Caco-2 (cell line): ENCODE measurements at regions of chr16 and their contacts with region 1.

Region 1: GRCh38 chr16:85330694-85331188 is 218.5 kb upstream of the CIBAR2 start:
- DNase-seq: peak; percentile 72 to 81
- H3K4me3 ChIP-seq: no peak overlapping the region
- H3K4me3 Mint-ChIP-seq: no peak overlapping the region
- H3K27ac Mint-ChIP-seq: peak overlapping the region; percentile 8
- H3K4me1 ChIP-seq: peaks cover 44% of the 10 kb centered on the region
- H3K4me1 Mint-ChIP-seq: peaks cover 39% of the 10 kb centered on the region
- H3K27me3 ChIP-seq: no peaks in the 10 kb centered on the region
- H3K27me3 Mint-ChIP-seq: no peaks in the 10 kb centered on the region
- CTCF ChIP-seq: peak; percentile 74 to 81

Region 2: GRCh38 chr16:85275533-85276249 is 55.0 kb before region 1 on chr16:
- CTCF ChIA-PET with region 1: interaction called, 4 read pairs
- POLR2A ChIA-PET with region 1: no interaction called
- intact Hi-C with region 1: loop called (anchors 2 kb)
- DNase-seq: peak; percentile 69 to 88
- H3K4me3 ChIP-seq: no peak overlapping the region
- H3K4me3 Mint-ChIP-seq: no peak overlapping the region
- H3K27ac Mint-ChIP-seq: no peak overlapping the region
- H3K4me1 ChIP-seq: no peaks in the 10 kb centered on the region
- H3K4me1 Mint-ChIP-seq: no peaks in the 10 kb centered on the region
- H3K27me3 ChIP-seq: no peaks in the 10 kb centered on the region
- H3K27me3 Mint-ChIP-seq: no peaks in the 10 kb centered on the region
- CTCF ChIP-seq: peak; percentile 97 to 98

Region 3: DNA sequence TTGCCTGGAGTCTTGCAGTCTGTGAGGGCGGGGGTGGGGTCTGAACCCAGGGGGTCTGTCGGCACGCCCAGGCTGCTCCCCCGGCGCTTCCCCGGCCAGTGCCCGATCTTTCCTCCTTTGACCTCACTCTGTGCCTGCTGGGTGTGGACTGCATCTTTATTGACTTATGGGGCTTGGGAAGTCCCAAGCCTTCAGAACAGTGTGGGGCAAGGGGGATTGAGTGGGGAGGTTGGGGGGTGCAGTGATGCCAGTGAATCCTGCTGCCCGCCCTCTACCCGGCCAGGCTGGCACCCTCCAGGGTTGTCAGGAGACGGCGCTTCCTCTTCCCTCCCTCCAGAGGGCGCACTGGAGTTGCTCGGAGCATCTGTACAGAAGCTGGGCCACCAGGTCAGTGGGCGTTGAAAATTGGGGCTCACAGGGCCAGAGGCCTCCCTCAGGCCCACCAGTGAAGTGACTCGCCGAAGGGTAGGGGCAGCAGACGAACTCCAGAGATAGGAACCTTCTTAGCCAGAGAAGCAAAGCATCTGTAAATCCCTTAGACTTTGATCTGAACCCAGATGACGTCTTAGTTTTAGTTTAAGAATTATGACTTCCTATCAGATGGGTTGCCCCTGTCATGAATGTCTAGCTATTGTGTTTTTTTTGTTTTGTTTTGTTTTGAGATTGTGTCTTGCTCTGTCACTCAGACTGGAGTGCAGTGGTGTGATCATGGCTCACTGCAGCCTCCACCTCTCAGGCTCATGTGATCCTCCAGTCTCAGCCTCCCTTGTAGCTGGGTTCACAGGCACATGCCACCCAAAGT is 33.7 kb before region 1 on chr16:
- CTCF ChIA-PET with region 1: interaction called, 8 read pairs
- POLR2A ChIA-PET with region 1: no interaction called
- intact Hi-C with region 1: loop called (anchors 5 kb)
- DNase-seq: peak; percentile 66 to 76
- H3K4me3 ChIP-seq: no peak overlapping the region
- H3K4me3 Mint-ChIP-seq: no peak overlapping the region
- H3K27ac Mint-ChIP-seq: no peak overlapping the region
- H3K4me1 ChIP-seq: peaks cover 8% of the 10 kb centered on the region; the same call in 1 of the 2 replicates
- H3K4me1 Mint-ChIP-seq: peaks cover 4% of the 10 kb centered on the region
- H3K27me3 ChIP-seq: no peaks in the 10 kb centered on the region
- H3K27me3 Mint-ChIP-seq: no peaks in the 10 kb centered on the region
- CTCF ChIP-seq: peak; percentile 90 to 92

Region 4: DNA sequence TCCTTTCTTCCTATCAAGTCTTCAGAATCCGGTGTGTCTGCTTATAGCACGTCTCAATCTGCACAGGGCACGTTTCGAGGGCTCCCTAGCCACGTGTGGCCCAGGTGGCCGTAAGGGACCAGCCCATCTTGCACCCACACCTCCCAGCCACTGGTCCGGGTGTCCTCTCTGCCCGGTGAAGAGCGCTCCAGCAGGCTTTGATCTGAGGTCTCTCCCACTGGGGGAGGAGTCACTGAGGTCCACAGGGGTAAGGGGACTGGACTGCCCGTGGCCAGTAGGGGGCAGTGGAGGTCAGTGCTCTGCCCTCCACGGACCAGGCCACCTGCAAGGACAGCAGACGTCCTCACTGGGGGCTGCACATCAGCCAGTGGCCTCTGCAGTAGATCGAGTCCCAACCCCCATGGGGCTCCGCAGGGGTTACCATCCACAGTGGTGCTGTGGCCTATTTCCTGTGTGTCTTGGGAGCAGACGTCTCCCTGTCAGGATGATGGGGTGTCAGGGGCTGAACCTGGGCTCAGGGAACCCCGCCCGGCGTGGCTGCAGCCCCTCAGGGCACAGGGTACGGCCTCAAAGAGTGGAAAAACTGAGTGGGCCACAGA is 14.3 kb before region 1 on chr16:
- CTCF ChIA-PET with region 1: interaction called, 8 read pairs
- POLR2A ChIA-PET with region 1: interaction called, 3 read pairs
- intact Hi-C with region 1: loop called (anchors 2 kb)
- DNase-seq: peak; percentile 77 to 87
- H3K4me3 ChIP-seq: no peak overlapping the region
- H3K4me3 Mint-ChIP-seq: no peak overlapping the region
- H3K27ac Mint-ChIP-seq: peak overlapping the region; percentile 34
- H3K4me1 ChIP-seq: no peaks in the 10 kb centered on the region
- H3K4me1 Mint-ChIP-seq: peaks cover 12% of the 10 kb centered on the region
- H3K27me3 ChIP-seq: no peaks in the 10 kb centered on the region
- H3K27me3 Mint-ChIP-seq: no peaks in the 10 kb centered on the region
- CTCF ChIP-seq: peak; percentile 93 to 95

Region 5: GRCh38 chr16:85354686-85355514 is 24.2 kb after region 1 on chr16:
- CTCF ChIA-PET with region 1: interaction called, 7 read pairs
- POLR2A ChIA-PET with region 1: no interaction called
- intact Hi-C with region 1: loop called (anchors 1 kb)
- DNase-seq: no peak
- H3K4me3 ChIP-seq: no peak overlapping the region
- H3K4me3 Mint-ChIP-seq: peak overlapping the region; percentile 23
- H3K27ac Mint-ChIP-seq: peak overlapping the region; percentile 88
- H3K4me1 ChIP-seq: peaks cover 51% of the 10 kb centered on the region
- H3K4me1 Mint-ChIP-seq: peaks cover 14% of the 10 kb centered on the region
- H3K27me3 ChIP-seq: no peaks in the 10 kb centered on the region
- H3K27me3 Mint-ChIP-seq: no peaks in the 10 kb centered on the region
- CTCF ChIP-seq: no peak